GM23248 (cell line): ENCODE measurements at regions of chr1 and their contacts with region 1.

Region 1: GRCh38 chr1:156383023-156383422 is 14.0 kb downstream of the RHBG start:
- DNase-seq: peak; percentile 73
- H3K4me3 ChIP-seq: no peak overlapping the region
- H3K27ac ChIP-seq: no peak overlapping the region
- H3K4me1 ChIP-seq: no peaks in the 10 kb centered on the region
- H3K27me3 ChIP-seq: peaks cover 7% of the 10 kb centered on the region; the same call in 1 of the 2 replicates

Region 2: GRCh38 chr1:156445789-156446263 is 62.8 kb after region 1 on chr1:
- in situ Hi-C with region 1: loop called (anchors 10 kb)
- DNase-seq: peak; percentile 87
- H3K4me3 ChIP-seq: no peak overlapping the region
- H3K27ac ChIP-seq: no peak overlapping the region
- H3K4me1 ChIP-seq: no peaks in the 10 kb centered on the region
- H3K27me3 ChIP-seq: peaks cover 43% of the 10 kb centered on the region

Region 3: DNA sequence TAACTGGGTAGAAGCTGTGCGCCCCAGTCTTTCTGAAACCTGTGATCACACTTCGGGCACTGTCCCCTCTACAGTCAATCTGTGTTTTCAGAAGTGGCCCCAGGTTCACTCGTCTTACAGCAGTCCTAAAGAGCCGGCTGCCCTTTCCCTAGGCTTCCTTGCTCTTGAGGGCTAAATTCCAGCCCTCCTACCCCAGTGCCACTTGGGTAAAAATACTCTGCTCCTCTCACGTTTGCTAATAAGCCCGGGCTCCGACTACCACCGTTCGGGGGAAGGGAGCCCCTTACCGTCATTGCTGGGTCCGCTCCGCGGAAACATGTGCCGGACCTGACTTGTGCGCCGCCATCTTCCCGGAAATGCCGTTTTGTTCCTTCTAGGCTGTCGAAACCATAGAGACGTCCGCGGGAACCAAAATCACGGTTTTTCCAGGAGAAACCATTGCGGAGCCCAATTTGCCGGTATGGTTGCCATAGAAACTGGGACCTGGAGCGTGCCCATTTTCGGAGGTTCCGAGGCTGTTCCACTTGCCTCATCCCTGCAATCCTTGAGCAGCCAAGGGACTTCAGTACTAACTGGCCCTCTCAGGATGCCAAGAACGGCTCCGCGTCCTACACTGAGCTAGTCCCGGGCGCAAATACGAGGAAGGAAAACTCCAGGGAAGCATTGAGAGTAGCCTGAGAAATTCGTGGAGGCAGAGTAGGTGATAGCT is 218.3 kb after region 1 on chr1 and contains the start of gene GPATCH4:
- in situ Hi-C with region 1: loop called (anchors 10 kb)
- DNase-seq: peak; percentile 98
- H3K4me3 ChIP-seq: peak within 1 kb of the TSS; percentile 93
- H3K27ac ChIP-seq: peak within 1 kb of the TSS; percentile 76
- H3K4me1 ChIP-seq: peaks cover 17% of the 10 kb centered on the region
- H3K27me3 ChIP-seq: no peaks in the 10 kb centered on the region
- total RNA-seq, gene GPATCH4: 9.5 and 12.5 TPM in 2 replicates